ENCODE measurements at regions of chr2 and their contacts with region 1.

Region 1: GRCh38 chr2:43484323-43484930 is 111.4 kb downstream of the THADA start:
- DNase-seq: no peak
- H3K4me3 ChIP-seq: no peak overlapping the region
- H3K27ac ChIP-seq: peak overlapping the region in 2 of 4 donors; percentile 75 to 76
- H3K4me1 ChIP-seq: peaks cover 11 to 66% (median 12%) of the 10 kb centered on the region in 3 donors
- H3K27me3 ChIP-seq: no peaks in the 10 kb centered on the region
- CTCF ChIP-seq: peak; percentile 54 to 83 (median 68)
- POLR2A ChIP-seq: no peak

Region 2: DNA sequence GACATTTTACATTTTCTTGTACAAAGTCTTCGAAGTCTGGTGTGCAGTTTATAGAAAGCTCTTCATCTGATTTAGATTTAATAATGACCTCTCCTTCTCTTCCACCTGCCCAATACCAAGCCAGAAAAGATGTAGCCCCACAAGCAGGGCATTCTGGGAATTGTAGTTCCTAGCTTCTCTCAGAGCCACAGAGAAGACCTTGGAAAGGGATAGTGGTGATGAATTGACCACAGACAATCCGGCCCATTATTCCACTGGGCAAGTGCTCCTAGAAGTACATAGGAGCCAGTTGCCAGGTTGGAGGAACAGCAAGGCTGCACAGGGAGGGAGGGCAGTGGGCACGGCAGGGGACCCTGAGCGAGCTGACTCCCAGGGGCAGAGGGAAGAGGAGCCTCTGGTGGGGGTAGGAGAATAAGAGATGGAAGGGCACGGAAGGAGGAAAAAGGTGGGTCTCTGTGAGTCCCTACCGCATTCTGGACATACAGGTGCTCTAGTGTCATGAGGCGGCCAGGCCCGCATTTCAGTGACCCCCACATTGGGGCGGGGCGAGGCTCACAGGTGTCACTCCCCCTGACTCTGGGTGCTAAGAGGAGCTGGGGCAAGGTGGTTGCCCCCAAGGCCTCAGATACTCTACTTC is 539.5 kb before region 1 on chr2:
- intact Hi-C with region 1: loop called (anchors 10 kb)
- DNase-seq: no peak
- H3K4me3 ChIP-seq: no peak overlapping the region
- H3K27ac ChIP-seq: no peak overlapping the region
- H3K4me1 ChIP-seq: peaks cover 5 to 22% (median 14%) of the 10 kb centered on the region in 3 donors
- H3K27me3 ChIP-seq: no peaks in the 10 kb centered on the region
- CTCF ChIP-seq: no peak
- POLR2A ChIP-seq: no peak

Region 3: GRCh38 chr2:43100883-43101662 is 383.4 kb before region 1 on chr2:
- intact Hi-C with region 1: no loop called
- DNase-seq: no peak
- H3K4me3 ChIP-seq: peak overlapping the region; percentile 27 to 58 (median 44)
- H3K27ac ChIP-seq: peak overlapping the region; percentile 75 to 89 (median 86)
- H3K4me1 ChIP-seq: peaks cover 31 to 67% (median 33%) of the 10 kb centered on the region in 3 donors
- H3K27me3 ChIP-seq: no peaks in the 10 kb centered on the region
- CTCF ChIP-seq: no peak
- POLR2A ChIP-seq: peak in 1 of 4 donors; percentile 30

Region 4: GRCh38 chr2:43233218-43234212 is 250.9 kb before region 1 on chr2:
- intact Hi-C with region 1: loop called (anchors 5 kb)
- DNase-seq: no peak
- H3K4me3 ChIP-seq: no peak overlapping the region
- H3K27ac ChIP-seq: peak overlapping the region in 1 of 4 donors; percentile 29
- H3K4me1 ChIP-seq: peaks cover 5 to 29% (median 16%) of the 10 kb centered on the region in 3 donors
- H3K27me3 ChIP-seq: no peaks in the 10 kb centered on the region
- CTCF ChIP-seq: no peak
- POLR2A ChIP-seq: no peak

Measured in esophagus squamous epithelium (tissue), 5 donors.